Endothelial cell of umbilical vein (primary cell): ENCODE measurements at regions of chr7 and their contacts with region 1.

Region 1: GRCh38 chr7:13920053-13920697 is 69.3 kb downstream of the ETV1 start:
- DNase-seq: peak; percentile 99
- H3K4me3 ChIP-seq: peak overlapping the region in 2 of 3 experiments; percentile 19 to 67
- H3K27ac ChIP-seq: peak overlapping the region; percentile 99
- H3K4me1 ChIP-seq: peaks cover 21% of the 10 kb centered on the region
- H3K27me3 ChIP-seq: no peaks in the 10 kb centered on the region
- CTCF ChIP-seq: no peak
- POLR2A ChIP-seq: no peak

Region 2: GRCh38 chr7:13800694-13801448 is 119.3 kb before region 1 on chr7:
- CTCF ChIA-PET with region 1: no interaction called
- POLR2A ChIA-PET with region 1: no interaction called
- dilution Hi-C with region 1: no loop called
- intact Hi-C with region 1: loop called (anchors 1 kb)
- DNase-seq: peak; percentile 87
- H3K4me3 ChIP-seq: no peak overlapping the region
- H3K27ac ChIP-seq: peak overlapping the region; percentile 68
- H3K4me1 ChIP-seq: peaks cover 3% of the 10 kb centered on the region
- H3K27me3 ChIP-seq: no peaks in the 10 kb centered on the region
- CTCF ChIP-seq: no peak
- POLR2A ChIP-seq: no peak

Region 3: GRCh38 chr7:13850185-13850752 is 69.9 kb before region 1 on chr7:
- CTCF ChIA-PET with region 1: no interaction called
- POLR2A ChIA-PET with region 1: no interaction called
- dilution Hi-C with region 1: no loop called
- intact Hi-C with region 1: loop called (anchors 2 kb)
- DNase-seq: peak; percentile 82
- H3K4me3 ChIP-seq: no peak overlapping the region
- H3K27ac ChIP-seq: peak overlapping the region; percentile 75
- H3K4me1 ChIP-seq: peaks cover 11% of the 10 kb centered on the region
- H3K27me3 ChIP-seq: no peaks in the 10 kb centered on the region
- CTCF ChIP-seq: no peak
- POLR2A ChIP-seq: no peak

Region 4: GRCh38 chr7:13981070-13981469 is 60.9 kb after region 1 on chr7:
- CTCF ChIA-PET with region 1: interaction called, 12 read pairs
- POLR2A ChIA-PET with region 1: interaction called, 6 read pairs
- dilution Hi-C with region 1: no loop called
- intact Hi-C with region 1: loop called (anchors 1 kb)
- DNase-seq: peak; percentile 90
- H3K4me3 ChIP-seq: no peak overlapping the region
- H3K27ac ChIP-seq: peak overlapping the region; percentile 56
- H3K4me1 ChIP-seq: peaks cover 28% of the 10 kb centered on the region
- H3K27me3 ChIP-seq: no peaks in the 10 kb centered on the region
- CTCF ChIP-seq: no peak
- POLR2A ChIP-seq: no peak

Region 5: GRCh38 chr7:14021069-14021468 is 100.9 kb after region 1 on chr7:
- CTCF ChIA-PET with region 1: no interaction called
- POLR2A ChIA-PET with region 1: no interaction called
- dilution Hi-C with region 1: no loop called
- intact Hi-C with region 1: no loop called
- DNase-seq: no peak
- H3K4me3 ChIP-seq: no peak overlapping the region
- H3K27ac ChIP-seq: no peak overlapping the region
- H3K4me1 ChIP-seq: no peaks in the 10 kb centered on the region
- H3K27me3 ChIP-seq: no peaks in the 10 kb centered on the region
- CTCF ChIP-seq: no peak
- POLR2A ChIP-seq: no peak

Region 6: DNA sequence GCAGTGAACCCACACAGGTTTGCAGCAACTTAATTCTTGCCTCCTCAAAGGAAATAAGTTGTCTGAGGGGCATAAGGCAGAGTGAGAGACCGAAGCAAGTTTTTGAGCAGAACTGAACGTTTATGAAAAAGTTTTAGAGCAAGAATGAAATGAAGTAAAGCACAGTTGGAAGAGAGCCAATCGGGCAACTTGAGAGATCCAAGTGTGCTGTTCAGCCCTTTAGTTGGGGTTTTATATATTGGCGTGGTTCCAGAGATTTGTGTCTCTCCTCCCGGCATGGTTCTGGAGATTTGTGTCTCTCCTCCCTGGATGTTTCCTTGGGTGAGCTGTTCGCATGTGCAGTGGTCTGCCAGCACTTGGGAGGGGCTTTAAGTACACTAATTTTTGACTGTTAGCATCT is 1123.8 kb after region 1 on chr7:
- CTCF ChIA-PET with region 1: no interaction called
- POLR2A ChIA-PET with region 1: no interaction called
- dilution Hi-C with region 1: no loop called
- intact Hi-C with region 1: loop called (anchors 5 kb)
- DNase-seq: no peak
- H3K4me3 ChIP-seq: no peak overlapping the region
- H3K27ac ChIP-seq: no peak overlapping the region
- H3K4me1 ChIP-seq: peaks cover 24% of the 10 kb centered on the region
- H3K27me3 ChIP-seq: no peaks in the 10 kb centered on the region
- CTCF ChIP-seq: no peak
- POLR2A ChIP-seq: no peak